Astrocyte of the cerebellum (primary cell): ENCODE measurements at regions of chr14 and their contacts with region 1.

Region 1: GRCh38 chr14:24431569-24432258 is 2.0 kb downstream of the KHNYN start:
- DNase-seq: peak; percentile 81
- H3K4me3 ChIP-seq: peak overlapping the region; percentile 74
- CTCF ChIP-seq: peak; percentile 98

Region 2: DNA sequence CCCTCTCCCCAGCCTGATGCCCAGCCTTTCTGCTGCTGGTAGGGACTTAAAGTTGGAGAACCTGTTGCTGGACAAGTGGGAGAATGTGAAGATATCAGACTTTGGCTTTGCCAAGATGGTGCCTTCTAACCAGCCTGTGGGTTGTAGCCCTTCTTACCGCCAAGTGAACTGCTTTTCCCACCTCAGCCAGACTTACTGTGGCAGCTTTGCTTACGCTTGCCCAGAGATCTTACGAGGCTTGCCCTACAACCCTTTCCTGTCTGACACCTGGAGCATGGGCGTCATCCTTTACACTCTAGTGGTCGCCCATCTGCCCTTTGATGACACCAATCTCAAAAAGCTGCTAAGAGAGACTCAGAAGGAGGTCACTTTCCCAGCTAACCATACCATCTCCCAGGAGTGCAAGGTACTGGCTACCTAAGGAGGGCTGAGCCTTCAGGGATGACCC is 224.6 kb before region 1 on chr14:
- in situ Hi-C with region 1: loop called (anchors 10 kb)
- DNase-seq: no peak
- H3K4me3 ChIP-seq: no peak overlapping the region
- CTCF ChIP-seq: no peak

Region 3: GRCh38 chr14:24321212-24321975 is 110.3 kb before region 1 on chr14:
- in situ Hi-C with region 1: loop called (anchors 5 kb)
- DNase-seq: no peak
- H3K4me3 ChIP-seq: no peak overlapping the region
- CTCF ChIP-seq: no peak